ENCODE measurements at regions of chr9 and their contacts with region 1.

Region 1: DNA sequence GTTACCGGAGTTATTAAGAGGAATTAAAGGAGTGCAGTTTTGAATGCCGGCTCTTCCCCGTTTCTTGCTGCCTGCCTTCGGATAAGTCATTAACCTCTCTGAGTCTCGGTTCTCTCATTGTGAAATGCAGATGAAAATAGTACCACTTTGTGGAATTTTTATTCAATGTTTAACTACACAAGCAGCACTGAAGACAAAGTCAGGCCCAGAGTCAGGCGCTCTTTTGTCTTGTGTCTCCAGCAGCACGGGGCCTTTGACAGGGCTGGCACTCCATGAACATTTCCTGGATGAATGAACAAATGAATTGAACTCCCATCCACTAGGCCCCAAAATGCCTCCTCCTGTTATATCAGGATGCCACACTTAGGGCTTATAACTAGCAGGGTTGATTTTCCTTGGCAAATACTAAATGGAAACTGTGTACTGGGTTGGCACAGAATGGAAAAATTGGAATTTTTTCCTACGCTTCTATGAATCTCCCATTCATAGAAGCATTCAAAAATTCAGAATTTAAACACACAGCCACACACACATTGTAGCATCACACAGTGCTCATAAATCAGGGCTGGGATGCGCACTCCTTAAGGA is 332.8 kb downstream of the MLLT3 start:
- DNase-seq: no peak
- ATAC-seq: no peak
- H3K4me3 ChIP-seq: no peak overlapping the region
- H3K4me3 Mint-ChIP-seq: no peak overlapping the region
- H3K27ac ChIP-seq: no peak overlapping the region
- H3K27ac Mint-ChIP-seq: no peak overlapping the region
- H3K4me1 ChIP-seq: peaks cover 8% of the 10 kb centered on the region
- H3K4me1 Mint-ChIP-seq: peaks cover 18% of the 10 kb centered on the region
- H3K27me3 ChIP-seq: no peaks in the 10 kb centered on the region
- H3K27me3 Mint-ChIP-seq: no peaks in the 10 kb centered on the region
- CTCF ChIP-seq: no peak

Region 2: GRCh38 chr9:20325008-20325407 is 35.5 kb after region 1 on chr9:
- CTCF ChIA-PET with region 1: no interaction called
- POLR2A ChIA-PET with region 1: interaction called, 3 read pairs
- intact Hi-C with region 1: loop called in 1 of 2 experiments (anchors 5 kb)
- DNase-seq: no peak
- ATAC-seq: no peak
- H3K4me3 ChIP-seq: no peak overlapping the region
- H3K4me3 Mint-ChIP-seq: no peak overlapping the region
- H3K27ac ChIP-seq: no peak overlapping the region
- H3K27ac Mint-ChIP-seq: peak overlapping the region; percentile 31
- H3K4me1 ChIP-seq: peaks cover 43% of the 10 kb centered on the region
- H3K4me1 Mint-ChIP-seq: peaks cover 53% of the 10 kb centered on the region
- H3K27me3 ChIP-seq: no peaks in the 10 kb centered on the region
- H3K27me3 Mint-ChIP-seq: no peaks in the 10 kb centered on the region
- CTCF ChIP-seq: no peak